Activated naive CD4-positive, alpha-beta T cell treated with anti-CD3 and anti-CD28 coated beads, Interleukin-2, amount 10 ng/mL, durations not matched to agents 7 days and 5 days (primary cell): ENCODE measurements at regions of chr21 and their contacts with region 1.

Region 1: GRCh38 chr21:37000381-37000780 is 6.1 kb upstream of the RIPPLY3 start:
- DNase-seq: no peak
- H3K4me3 Mint-ChIP-seq: no peak overlapping the region
- H3K27ac Mint-ChIP-seq: no peak overlapping the region
- H3K4me1 Mint-ChIP-seq: peaks cover 12% of the 10 kb centered on the region
- H3K27me3 Mint-ChIP-seq: peaks cover 38% of the 10 kb centered on the region

Region 2: GRCh38 chr21:36989699-36990507 is 10.5 kb before region 1 on chr21:
- CTCF ChIA-PET with region 1: interaction called, 10 read pairs
- DNase-seq: peak; percentile 92
- H3K4me3 Mint-ChIP-seq: peak overlapping the region; percentile 75
- H3K27ac Mint-ChIP-seq: peak overlapping the region; percentile 89
- H3K4me1 Mint-ChIP-seq: peaks cover 53% of the 10 kb centered on the region
- H3K27me3 Mint-ChIP-seq: peaks cover 7% of the 10 kb centered on the region